ENCODE measurements at regions of chr10 and their contacts with region 1.

Region 1: GRCh38 chr10:43436400-43437140 is at the start of gene ZNF487:
- DNase-seq: peak; percentile 80 to 94 (median 87)
- ATAC-seq: peak; percentile 86
- H3K4me3 ChIP-seq: peak within 1 kb of the TSS; percentile 98 to 99
- H3K4me3 Mint-ChIP-seq: peak within 1 kb of the TSS; percentile 94
- H3K27ac ChIP-seq: peak within 1 kb of the TSS; percentile 98 to 100
- H3K27ac Mint-ChIP-seq: peak within 1 kb of the TSS; percentile 97
- H3K4me1 ChIP-seq: peaks cover 18% of the 10 kb centered on the region
- H3K4me1 Mint-ChIP-seq: peaks cover 26% of the 10 kb centered on the region
- H3K27me3 ChIP-seq: no peaks in the 10 kb centered on the region
- H3K27me3 Mint-ChIP-seq: no peaks in the 10 kb centered on the region
- CTCF ChIP-seq: no peak
- total RNA-seq, gene ZNF487: 7.3 to 8.9 TPM

Region 2: GRCh38 chr10:43120116-43120928 is 316.2 kb before region 1 on chr10:
- CTCF ChIA-PET with region 1: no interaction called
- POLR2A ChIA-PET with region 1: no interaction called
- intact Hi-C with region 1: no loop called
- DNase-seq: no peak
- ATAC-seq: no peak
- H3K4me3 ChIP-seq: no peak overlapping the region
- H3K4me3 Mint-ChIP-seq: no peak overlapping the region
- H3K27ac ChIP-seq: peak overlapping the region; percentile 10 to 66
- H3K27ac Mint-ChIP-seq: peak overlapping the region; percentile 83
- H3K4me1 ChIP-seq: peaks cover 24% of the 10 kb centered on the region
- H3K4me1 Mint-ChIP-seq: peaks cover 21% of the 10 kb centered on the region
- H3K27me3 ChIP-seq: no peaks in the 10 kb centered on the region
- H3K27me3 Mint-ChIP-seq: no peaks in the 10 kb centered on the region
- CTCF ChIP-seq: no peak

Region 3: GRCh38 chr10:43396928-43397624 is 39.5 kb before region 1 on chr10:
- CTCF ChIA-PET with region 1: interaction called, 5 read pairs
- POLR2A ChIA-PET with region 1: interaction called, 4 read pairs
- intact Hi-C with region 1: loop called (anchors 2 kb)
- DNase-seq: peak; percentile 44 to 89 (median 73)
- ATAC-seq: peak; percentile 51
- H3K4me3 ChIP-seq: peak overlapping the region; percentile 64 to 71
- H3K4me3 Mint-ChIP-seq: peak overlapping the region; percentile 94
- H3K27ac ChIP-seq: peak overlapping the region; percentile 66 to 89
- H3K27ac Mint-ChIP-seq: peak overlapping the region; percentile 93
- H3K4me1 ChIP-seq: peaks cover 71% of the 10 kb centered on the region
- H3K4me1 Mint-ChIP-seq: peaks cover 80% of the 10 kb centered on the region
- H3K27me3 ChIP-seq: no peaks in the 10 kb centered on the region
- H3K27me3 Mint-ChIP-seq: no peaks in the 10 kb centered on the region
- CTCF ChIP-seq: no peak

Region 4: GRCh38 chr10:43420369-43421200 is 16.0 kb before region 1 on chr10:
- CTCF ChIA-PET with region 1: interaction called, 5 read pairs
- POLR2A ChIA-PET with region 1: interaction called, 17 read pairs
- intact Hi-C with region 1: loop called (anchors 1 kb)
- DNase-seq: peak; percentile 64 to 96 (median 86)
- ATAC-seq: peak; percentile 87
- H3K4me3 ChIP-seq: peak overlapping the region; percentile 65 to 92
- H3K4me3 Mint-ChIP-seq: peak overlapping the region; percentile 93
- H3K27ac ChIP-seq: peak overlapping the region; percentile 82 to 83
- H3K27ac Mint-ChIP-seq: peak overlapping the region; percentile 98
- H3K4me1 ChIP-seq: peaks cover 40% of the 10 kb centered on the region
- H3K4me1 Mint-ChIP-seq: peaks cover 33% of the 10 kb centered on the region
- H3K27me3 ChIP-seq: no peaks in the 10 kb centered on the region
- H3K27me3 Mint-ChIP-seq: no peaks in the 10 kb centered on the region
- CTCF ChIP-seq: no peak

Measured in CD8-positive, alpha-beta T cell (primary cell).